Common myeloid progenitor, CD34-positive (primary cell): ENCODE measurements at regions of chr15 and their contacts with region 1.

Region 1: GRCh38 chr15:80059786-80060355 is 395 bp downstream of the ZFAND6 start:
- DNase-seq: peak; percentile 66 to 88 (median 83)
- H3K4me3 ChIP-seq: peak overlapping the region; percentile 80 to 95 (median 85)
- H3K27ac ChIP-seq: peak overlapping the region; percentile 93 to 94
- H3K4me1 ChIP-seq: peaks cover 11 to 33% (median 20%) of the 10 kb centered on the region in 4 experiments
- H3K27me3 ChIP-seq: no peaks in the 10 kb centered on the region

Region 2: GRCh38 chr15:80081390-80081789 is 21.5 kb after region 1 on chr15:
- CTCF ChIA-PET with region 1: interaction called, 10 read pairs
- POLR2A ChIA-PET with region 1: interaction called, 3 read pairs
- DNase-seq: peak; percentile 60 to 87 (median 79)
- H3K4me3 ChIP-seq: peak overlapping the region in 2 of 7 experiments; percentile 10 to 50
- H3K27ac ChIP-seq: peak overlapping the region; percentile 19 to 60
- H3K4me1 ChIP-seq: peaks cover 5 to 15% (median 8%) of the 10 kb centered on the region in 4 experiments
- H3K27me3 ChIP-seq: no peaks in the 10 kb centered on the region